ENCODE measurements at regions of chr7 and their contacts with region 1.

Region 1: DNA sequence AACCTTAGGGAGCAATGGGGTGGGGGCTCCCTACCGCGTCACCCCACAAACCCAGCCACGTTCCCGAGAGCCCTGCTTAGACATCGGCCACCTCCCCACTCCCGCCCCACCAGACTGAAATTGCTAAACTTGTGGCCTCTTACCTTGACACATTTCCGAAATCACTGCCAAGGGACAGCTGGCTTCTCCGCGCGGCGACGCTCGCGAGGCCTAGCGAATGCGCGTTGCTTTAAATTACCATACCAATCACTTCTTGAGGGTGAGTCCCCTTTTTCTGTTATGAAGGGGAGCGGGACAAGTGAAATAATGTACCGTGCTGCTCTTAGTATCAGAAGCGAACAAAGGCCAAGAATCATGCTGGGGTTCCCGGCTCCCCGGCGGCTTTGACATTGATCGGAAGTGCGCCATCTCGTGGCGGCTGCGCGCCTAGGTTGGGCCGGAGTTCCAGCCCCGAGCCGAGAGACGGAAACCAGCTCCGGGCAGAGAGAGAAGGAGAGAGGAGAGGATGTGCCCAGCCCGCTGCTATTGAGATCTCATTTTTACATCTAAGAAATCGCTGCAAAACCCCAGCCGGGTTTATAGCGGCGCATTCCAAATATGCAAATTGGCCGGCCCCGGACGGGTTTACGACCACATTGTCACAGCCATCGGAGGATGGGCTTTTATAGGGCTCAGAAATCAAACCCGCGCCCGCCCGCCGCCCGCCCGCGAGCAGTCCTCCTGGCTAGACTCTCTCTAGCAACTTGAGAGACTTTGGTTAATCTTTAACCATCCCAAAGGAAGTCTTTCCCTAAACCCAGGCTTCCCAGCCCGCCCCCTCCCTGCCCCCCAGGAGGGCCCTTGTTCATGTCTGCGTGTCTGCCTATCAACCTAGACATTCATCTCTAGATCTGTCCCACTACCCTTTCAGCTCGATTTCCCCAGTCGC is 5.3 kb downstream of the HOXA11 start:
- DNase-seq: no peak
- H3K4me3 ChIP-seq: peak overlapping the region; percentile 32
- H3K27ac ChIP-seq: no peak overlapping the region
- H3K27me3 ChIP-seq: peaks cover 92% of the 10 kb centered on the region
- CTCF ChIP-seq: peak; percentile 90

Region 2: GRCh38 chr7:27160546-27161213 is 19.1 kb before region 1 on chr7:
- CTCF ChIA-PET with region 1: interaction called, 21 read pairs
- POLR2A ChIA-PET with region 1: no interaction called
- DNase-seq: peak; percentile 64
- H3K4me3 ChIP-seq: peak overlapping the region; percentile 62
- H3K27ac ChIP-seq: no peak overlapping the region
- H3K27me3 ChIP-seq: peaks cover 26% of the 10 kb centered on the region
- CTCF ChIP-seq: peak; percentile 96

Region 3: DNA sequence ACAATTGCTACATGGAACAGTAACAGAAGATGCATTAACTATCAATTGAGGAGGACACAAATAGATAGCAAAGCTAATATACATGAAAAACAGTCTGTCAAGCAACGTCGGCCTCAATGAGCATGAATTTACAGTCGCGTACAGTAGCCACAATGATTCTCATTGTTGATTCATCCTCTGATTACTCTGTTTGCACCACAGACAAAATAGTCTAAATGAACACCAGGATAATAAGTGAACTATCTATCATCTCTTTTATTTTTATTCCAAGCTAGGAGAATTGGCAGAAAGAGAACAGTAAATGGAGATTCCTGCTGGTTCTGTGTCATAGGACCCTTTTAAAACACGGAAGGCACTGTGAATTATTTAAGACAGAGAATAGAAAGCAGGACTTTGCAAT is 171.4 kb after region 1 on chr7:
- CTCF ChIA-PET with region 1: no interaction called
- POLR2A ChIA-PET with region 1: no interaction called
- DNase-seq: no peak
- H3K4me3 ChIP-seq: no peak overlapping the region
- H3K27ac ChIP-seq: no peak overlapping the region
- H3K27me3 ChIP-seq: peaks cover 19% of the 10 kb centered on the region
- CTCF ChIP-seq: no peak

Measured in AG04450 (cell line).